Gastrocnemius medialis (tissue), 4 donors: ENCODE measurements at regions of chr13 and their contacts with region 1.

Region 1: DNA sequence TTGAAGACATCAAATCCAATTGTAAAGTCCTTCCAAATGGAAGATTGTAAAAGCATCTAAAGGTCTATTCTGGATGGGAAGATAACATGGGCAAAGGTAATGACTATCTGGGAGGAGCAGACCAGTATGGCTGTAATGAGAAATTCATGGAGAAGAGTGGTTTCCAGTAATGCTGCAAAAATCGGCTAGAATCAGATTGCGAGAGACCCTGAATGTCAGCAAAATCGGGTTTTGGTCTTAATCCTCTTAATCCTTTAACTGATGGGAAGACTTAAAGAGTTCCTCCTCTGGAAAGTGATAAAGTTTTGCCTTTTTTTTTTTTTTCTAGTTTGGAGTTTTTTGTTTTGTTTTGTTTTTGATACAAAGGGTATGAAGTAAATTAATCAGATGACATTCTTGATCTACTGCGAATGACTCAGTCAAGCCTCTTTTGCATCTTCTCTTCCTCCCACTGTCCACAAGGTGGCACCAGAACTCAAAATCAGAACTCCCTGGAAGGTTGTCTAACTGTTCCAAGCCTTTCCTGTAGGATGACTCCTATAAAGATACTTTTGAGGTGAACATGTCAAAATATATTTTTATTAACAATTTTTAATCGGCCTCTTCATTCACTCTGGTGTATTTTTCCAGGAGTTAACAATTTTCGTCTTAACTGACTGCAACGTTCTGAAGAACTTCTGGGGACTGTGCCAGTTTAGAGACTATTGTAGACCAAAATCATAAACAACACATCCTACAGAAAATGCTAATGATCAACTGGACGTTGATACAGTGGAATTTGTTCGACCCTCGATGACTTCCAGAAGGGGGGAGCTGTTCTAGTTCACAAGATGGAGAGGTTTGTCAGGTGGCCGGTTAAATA is 213.3 kb upstream of the MIR17HG start:
- DNase-seq: no peak
- ATAC-seq: peak; percentile 47 to 64
- H3K4me3 ChIP-seq: no peak overlapping the region
- H3K27ac ChIP-seq: no peak overlapping the region
- H3K4me1 ChIP-seq: no peaks in the 10 kb centered on the region
- H3K27me3 ChIP-seq: no peaks in the 10 kb centered on the region
- CTCF ChIP-seq: peak; percentile 31 to 60 (median 44)
- POLR2A ChIP-seq: no peak

Region 2: GRCh38 chr13:90253806-90254205 is 880.4 kb before region 1 on chr13:
- in situ Hi-C with region 1: no loop called
- intact Hi-C with region 1: no loop called
- DNase-seq: no peak
- ATAC-seq: no peak
- H3K4me3 ChIP-seq: no peak overlapping the region
- H3K27ac ChIP-seq: no peak overlapping the region
- H3K4me1 ChIP-seq: no peaks in the 10 kb centered on the region
- H3K27me3 ChIP-seq: no peaks in the 10 kb centered on the region
- CTCF ChIP-seq: no peak
- POLR2A ChIP-seq: no peak

Region 3: DNA sequence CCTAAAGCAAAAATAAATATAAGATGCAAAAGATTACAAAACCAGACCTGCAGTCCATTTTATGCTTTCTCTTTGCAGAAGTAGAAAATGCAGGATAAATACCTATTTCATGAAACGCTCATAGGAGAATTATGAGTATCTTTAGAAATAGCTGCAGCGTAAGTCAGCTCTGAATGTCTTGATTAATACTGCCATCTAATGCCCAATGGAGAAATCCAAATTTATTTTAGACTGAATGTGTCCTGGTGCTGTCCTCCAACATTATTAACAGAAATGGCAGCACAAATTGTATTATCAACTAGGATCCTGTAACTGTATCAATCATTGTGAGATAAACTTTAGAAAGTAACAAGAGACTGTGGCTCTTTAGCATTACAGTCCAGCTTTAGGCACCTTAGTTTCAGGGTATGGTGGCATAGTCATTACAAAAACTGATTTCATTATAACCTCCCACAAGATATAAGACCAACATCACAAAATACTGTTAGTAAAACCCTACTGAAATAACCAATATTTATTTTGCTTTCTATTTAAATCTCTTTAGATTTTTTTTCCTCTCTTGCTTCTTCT is 51.2 kb after region 1 on chr13:
- in situ Hi-C with region 1: loop called in 1 of 4 experiments (anchors 10 kb)
- intact Hi-C with region 1: loop called (anchors 1 kb)
- DNase-seq: no peak
- ATAC-seq: no peak
- H3K4me3 ChIP-seq: no peak overlapping the region
- H3K27ac ChIP-seq: no peak overlapping the region
- H3K4me1 ChIP-seq: no peaks in the 10 kb centered on the region
- H3K27me3 ChIP-seq: no peaks in the 10 kb centered on the region
- CTCF ChIP-seq: no peak
- POLR2A ChIP-seq: no peak